Heart right ventricle (tissue), 16 donors: ENCODE measurements at regions of chr18 and their contacts with region 1.

Region 1: GRCh38 chr18:34707670-34708069 is 2.4 kb upstream of the DTNA start:
- DNase-seq: peak in 1 of 2 donors; percentile 82
- ATAC-seq: peak in 7 of 8 donors; percentile 57 to 71 (median 68)
- H3K4me3 ChIP-seq: peak overlapping the region in 2 of 10 donors; percentile 0 to 8
- H3K27ac ChIP-seq: peak overlapping the region; percentile 14 to 81 (median 66)
- H3K4me1 ChIP-seq: peaks cover 6 to 58% (median 35%) of the 10 kb centered on the region in 9 donors
- H3K27me3 ChIP-seq: no peaks in the 10 kb centered on the region
- CTCF ChIP-seq: no peak

Region 2: GRCh38 chr18:34624551-34624950 is 83.1 kb before region 1 on chr18:
- intact Hi-C with region 1: no loop called
- DNase-seq: no peak
- ATAC-seq: no peak
- H3K4me3 ChIP-seq: no peak overlapping the region
- H3K27ac ChIP-seq: no peak overlapping the region
- H3K4me1 ChIP-seq: peaks cover 0 to 18% (median 3%) of the 10 kb centered on the region in 9 donors
- H3K27me3 ChIP-seq: no peaks in the 10 kb centered on the region
- CTCF ChIP-seq: no peak

Region 3: GRCh38 chr18:34742891-34743341 is 35.2 kb after region 1 on chr18:
- intact Hi-C with region 1: loop called in 1 of 10 experiments (anchors 5 kb)
- DNase-seq: no peak
- ATAC-seq: peak in 3 of 8 donors; percentile 27 to 38 (median 31)
- H3K4me3 ChIP-seq: no peak overlapping the region
- H3K27ac ChIP-seq: peak overlapping the region in 2 of 10 donors; percentile 27 to 47
- H3K4me1 ChIP-seq: peaks cover 4 to 70% (median 29%) of the 10 kb centered on the region in 9 donors
- H3K27me3 ChIP-seq: no peaks in the 10 kb centered on the region
- CTCF ChIP-seq: no peak

Region 4: GRCh38 chr18:34760444-34760843 is 52.8 kb after region 1 on chr18:
- intact Hi-C with region 1: no loop called
- DNase-seq: peak; percentile 25 to 27
- ATAC-seq: peak in 6 of 8 donors; percentile 73 to 91 (median 82)
- H3K4me3 ChIP-seq: no peak overlapping the region
- H3K27ac ChIP-seq: peak overlapping the region in 1 of 10 donors; percentile 11
- H3K4me1 ChIP-seq: peaks cover 0 to 17% (median 7%) of the 10 kb centered on the region in 9 donors
- H3K27me3 ChIP-seq: no peaks in the 10 kb centered on the region
- CTCF ChIP-seq: no peak

Region 5: DNA sequence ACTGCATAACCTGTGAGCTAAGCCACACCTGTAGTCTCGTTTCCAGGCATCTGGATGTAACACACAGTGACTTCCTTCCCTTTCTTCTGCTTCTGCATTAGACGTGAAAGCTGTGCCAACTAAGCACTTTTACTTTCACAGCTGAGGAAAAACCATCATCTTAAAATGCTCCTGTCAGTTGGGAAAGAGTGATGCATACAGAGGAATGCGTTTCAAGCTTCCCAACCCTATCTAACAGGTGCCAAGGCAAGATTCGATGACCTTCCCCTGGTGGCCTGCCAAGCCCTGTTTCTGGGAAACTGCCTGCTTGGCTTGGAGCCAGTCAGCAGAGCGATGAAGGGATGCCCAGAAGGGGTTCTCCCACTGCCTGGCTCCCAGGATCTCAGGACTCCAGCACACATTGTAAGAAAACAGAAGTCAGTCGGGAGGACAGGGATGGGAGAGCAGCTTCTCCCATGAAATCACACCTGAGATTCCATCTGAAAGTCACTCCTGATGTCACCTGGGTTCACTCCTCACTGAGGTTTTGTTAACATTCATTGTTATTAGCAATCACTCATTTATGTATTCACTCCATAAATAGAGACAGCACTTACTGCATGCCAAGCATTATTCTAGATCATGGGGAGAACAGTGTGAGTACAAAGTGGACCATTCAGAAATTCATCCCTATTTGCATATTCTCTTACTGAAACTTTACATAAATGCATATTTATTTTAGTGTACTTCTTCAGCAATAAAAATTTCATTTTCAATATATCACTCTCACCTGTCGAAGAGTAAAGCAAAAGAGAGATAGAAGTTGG is 66.5 kb after region 1 on chr18:
- intact Hi-C with region 1: loop called in 1 of 10 experiments (anchors 10 kb)
- DNase-seq: peak; percentile 38 to 54
- ATAC-seq: peak; percentile 38 to 83 (median 77)
- H3K4me3 ChIP-seq: no peak overlapping the region
- H3K27ac ChIP-seq: peak overlapping the region in 7 of 10 donors; percentile 8 to 71 (median 66)
- H3K4me1 ChIP-seq: peaks cover 0 to 35% (median 22%) of the 10 kb centered on the region in 9 donors
- H3K27me3 ChIP-seq: no peaks in the 10 kb centered on the region
- CTCF ChIP-seq: no peak